ENCODE measurements at regions of chr11 and their contacts with region 1.

Region 1: GRCh38 chr11:36376888-36377758 is 81.0 kb downstream of the PRR5L start:
- DNase-seq: peak; percentile 52 to 56
- ATAC-seq: peak; percentile 82 to 93
- H3K4me3 ChIP-seq: peak overlapping the region; percentile 70
- H3K27ac ChIP-seq: peak overlapping the region; percentile 61 to 84
- H3K4me1 ChIP-seq: peaks cover 17% of the 10 kb centered on the region
- CTCF ChIP-seq: peak; percentile 78
- EP300 ChIP-seq: no peak
- POLR2A ChIP-seq: 0 out of 2 replicates have a peak, but pooled peaks have one; percentile 22
- RAD21 ChIP-seq: peak; percentile 30 to 62; a peak in 4 of 5 replicates

Region 2: DNA sequence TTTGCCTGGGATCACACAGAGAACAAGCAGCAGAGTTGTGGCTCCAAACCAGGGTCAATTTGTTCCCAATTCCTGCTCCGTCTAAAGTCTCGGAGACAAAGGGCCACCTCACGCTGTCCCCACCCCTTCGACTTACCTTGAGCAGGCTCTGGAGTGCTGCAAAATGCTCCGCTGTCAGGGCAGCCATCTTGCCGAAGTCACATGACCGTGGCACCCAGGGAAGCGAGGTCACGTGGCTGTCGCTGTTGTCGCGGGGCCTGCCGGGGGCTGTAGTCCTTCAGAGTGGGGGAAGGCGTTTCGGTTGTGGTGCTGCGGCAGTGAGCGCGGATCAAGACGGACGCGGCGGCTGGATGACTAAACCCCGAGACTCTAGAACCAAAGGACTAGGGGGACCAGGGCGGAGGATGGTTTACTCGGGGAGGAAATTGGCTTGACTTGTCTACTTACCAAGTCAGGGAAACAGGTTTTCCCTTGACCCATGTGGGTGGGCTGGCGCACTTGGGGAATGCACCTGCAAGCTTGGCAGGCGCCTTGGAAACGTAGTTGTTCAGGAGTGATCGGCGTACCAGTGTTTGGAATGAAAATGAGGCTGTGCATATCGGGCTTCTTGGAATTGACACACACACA is 87.8 kb before region 1 on chr11 and contains the start of gene COMMD9:
- CTCF ChIA-PET with region 1: interaction called, 11 read pairs
- POLR2A ChIA-PET with region 1: no interaction called
- DNase-seq: peak; percentile 94
- ATAC-seq: peak; percentile 96 to 99
- H3K4me3 ChIP-seq: peak within 1 kb of the TSS; percentile 98
- H3K27ac ChIP-seq: peak within 1 kb of the TSS; percentile 70 to 85
- H3K4me1 ChIP-seq: peaks cover 6% of the 10 kb centered on the region; the same call in 1 of the 3 replicates
- CTCF ChIP-seq: no peak
- EP300 ChIP-seq: no peak
- POLR2A ChIP-seq: peak; percentile 48
- RAD21 ChIP-seq: no peak
- polyA plus RNA-seq, gene COMMD9: 37.3 and 44.3 TPM in 2 replicates

Region 3: DNA sequence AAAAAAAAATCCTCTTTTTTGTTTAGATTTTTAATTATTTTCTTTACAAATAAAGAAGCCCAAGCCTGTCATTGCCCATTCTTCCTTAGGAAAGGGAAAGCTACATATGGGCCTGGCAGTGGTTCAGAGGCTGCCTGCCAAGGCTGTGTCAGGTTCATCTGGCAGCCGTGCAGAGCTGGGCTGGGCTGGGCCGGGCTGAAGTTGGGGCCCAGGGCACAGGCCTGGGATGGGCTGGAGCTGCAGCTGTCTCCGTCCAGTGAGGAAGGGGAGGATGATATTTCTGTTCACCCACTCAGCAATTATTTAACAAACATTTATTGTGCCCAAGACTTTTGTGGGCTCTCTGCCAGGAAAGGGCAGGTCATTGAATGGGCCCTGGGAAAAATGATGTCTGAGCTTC is 76.5 kb before region 1 on chr11:
- CTCF ChIA-PET with region 1: interaction called, 20 read pairs
- POLR2A ChIA-PET with region 1: interaction called, 6 read pairs
- DNase-seq: no peak
- ATAC-seq: no peak
- H3K4me3 ChIP-seq: no peak overlapping the region
- H3K27ac ChIP-seq: no peak overlapping the region
- H3K4me1 ChIP-seq: peaks cover 11% of the 10 kb centered on the region; the same call in 1 of the 3 replicates
- CTCF ChIP-seq: no peak
- EP300 ChIP-seq: no peak
- POLR2A ChIP-seq: no peak
- RAD21 ChIP-seq: no peak

Region 4: DNA sequence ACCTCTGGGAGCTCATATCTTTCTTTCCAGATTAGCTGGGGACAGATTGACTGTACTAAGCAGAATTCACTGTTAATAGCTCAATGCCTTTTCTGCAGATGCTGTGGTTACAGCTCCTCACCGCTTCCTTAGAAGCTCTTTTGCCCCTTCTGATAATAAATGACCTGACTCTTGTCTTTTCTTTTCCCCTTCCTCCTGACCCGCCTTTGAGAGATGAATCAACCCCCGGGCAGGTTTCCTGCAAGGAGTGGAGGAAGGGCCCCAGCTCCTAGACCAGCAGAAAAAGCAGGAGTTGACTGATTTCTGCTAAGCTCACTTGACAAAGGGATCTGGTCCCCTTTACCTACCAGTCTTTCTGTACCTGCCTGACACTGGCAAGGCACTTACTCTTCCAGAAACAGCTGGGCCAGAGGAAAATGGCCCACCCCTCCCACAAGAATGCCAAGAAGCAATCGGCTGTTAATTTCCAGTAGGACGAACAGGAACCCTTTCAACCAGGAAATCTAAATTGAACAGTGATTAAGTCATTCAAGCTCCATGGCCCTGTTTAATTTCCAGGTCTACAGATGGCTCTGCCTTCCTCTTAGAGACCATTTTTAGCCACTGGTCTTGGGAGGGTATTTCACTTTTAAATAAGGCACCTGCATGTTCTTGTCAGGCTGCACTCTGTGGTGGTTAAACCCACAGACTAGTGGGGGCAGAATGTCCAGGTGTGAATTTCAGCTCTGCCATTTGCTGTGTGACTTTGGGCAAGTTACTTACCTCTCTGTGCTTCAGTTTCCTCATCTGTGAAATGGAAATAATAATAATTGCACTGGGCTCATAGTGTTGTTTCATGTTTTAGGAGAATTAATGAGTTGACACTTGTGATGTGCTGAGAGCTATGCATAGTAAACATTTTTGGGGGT is 13.5 kb before region 1 on chr11:
- CTCF ChIA-PET with region 1: interaction called, 20 read pairs
- POLR2A ChIA-PET with region 1: no interaction called
- DNase-seq: no peak
- ATAC-seq: peak in 1 of 2 experiments; percentile 16; a peak in 2 of 6 replicates
- H3K4me3 ChIP-seq: no peak overlapping the region
- H3K27ac ChIP-seq: peak overlapping the region in 1 of 2 experiments; percentile 57; a peak in 2 of 6 replicates
- H3K4me1 ChIP-seq: peaks cover 31% of the 10 kb centered on the region
- CTCF ChIP-seq: no peak
- EP300 ChIP-seq: no peak
- POLR2A ChIP-seq: no peak
- RAD21 ChIP-seq: no peak

Region 5: GRCh38 chr11:36389811-36390210 is 12.7 kb after region 1 on chr11:
- CTCF ChIA-PET with region 1: interaction called, 14 read pairs
- POLR2A ChIA-PET with region 1: no interaction called
- DNase-seq: no peak
- ATAC-seq: no peak
- H3K4me3 ChIP-seq: no peak overlapping the region
- H3K27ac ChIP-seq: no peak overlapping the region
- H3K4me1 ChIP-seq: peaks cover 8% of the 10 kb centered on the region; the same call in 1 of the 3 replicates
- CTCF ChIP-seq: no peak
- EP300 ChIP-seq: no peak
- POLR2A ChIP-seq: no peak
- RAD21 ChIP-seq: no peak

Region 6: DNA sequence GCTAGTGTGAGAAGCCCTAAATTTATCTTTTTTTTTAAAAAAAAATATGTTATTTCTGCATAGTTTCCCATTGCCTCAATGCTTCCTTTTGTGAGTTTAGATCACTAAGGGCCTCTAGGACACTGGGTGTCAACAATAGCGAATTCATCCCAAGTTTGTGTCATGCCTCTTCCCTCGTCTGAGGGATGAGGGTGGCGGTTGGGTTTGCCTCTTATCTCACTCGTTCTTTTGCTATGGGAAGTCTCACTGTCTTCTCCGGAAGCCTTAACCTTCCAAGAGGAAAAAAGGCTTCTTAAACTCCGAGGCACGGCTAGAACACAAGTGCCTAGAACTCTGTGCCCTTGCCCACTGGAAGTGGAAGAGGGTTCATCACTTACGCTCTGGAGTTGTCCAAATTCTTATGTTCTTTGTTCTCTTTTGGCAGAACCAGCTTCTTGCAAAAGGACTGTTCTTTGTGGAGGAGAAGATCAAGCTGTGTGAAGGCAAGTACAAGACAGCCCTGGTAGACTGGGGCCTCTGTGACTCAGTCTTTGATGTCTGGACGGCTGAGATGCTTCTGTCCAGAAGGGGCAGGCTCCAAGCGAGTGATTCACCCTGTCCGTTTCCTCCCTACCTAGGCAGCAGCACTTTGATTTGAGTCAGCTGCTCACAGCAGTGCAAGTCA is 54.4 kb after region 1 on chr11:
- CTCF ChIA-PET with region 1: interaction called, 11 read pairs
- POLR2A ChIA-PET with region 1: interaction called, 4 read pairs
- DNase-seq: peak; percentile 86 to 95
- ATAC-seq: peak; percentile 100
- H3K4me3 ChIP-seq: peak overlapping the region; percentile 18; the same call in 2 of the 3 replicates
- H3K27ac ChIP-seq: peak overlapping the region; percentile 72 to 91
- H3K4me1 ChIP-seq: peaks cover 38% of the 10 kb centered on the region
- CTCF ChIP-seq: no peak
- EP300 ChIP-seq: peak in 1 of 2 experiments; percentile 36; a peak in 1 of 5 replicates
- POLR2A ChIP-seq: no peak
- RAD21 ChIP-seq: peak; percentile 8 to 15; a peak in 3 of 5 replicates

Region 7: GRCh38 chr11:36492724-36493304 is 115.7 kb after region 1 on chr11:
- CTCF ChIA-PET with region 1: interaction called, 13 read pairs
- POLR2A ChIA-PET with region 1: no interaction called
- DNase-seq: peak; percentile 48 to 68
- ATAC-seq: peak; percentile 67 to 77; a peak in 5 of 6 replicates
- H3K4me3 ChIP-seq: no peak overlapping the region
- H3K27ac ChIP-seq: no peak overlapping the region
- H3K4me1 ChIP-seq: no peaks in the 10 kb centered on the region
- CTCF ChIP-seq: peak; percentile 89
- EP300 ChIP-seq: no peak
- POLR2A ChIP-seq: no peak
- RAD21 ChIP-seq: peak; percentile 73 to 81

Measured in A549 (cell line).